ENCODE measurements at regions of chr1 and their contacts with region 1.

Region 1: GRCh38 chr1:111481387-111482221 is 7.8 kb downstream of the C1orf162 start:
- DNase-seq: peak; percentile 77
- ATAC-seq: peak; percentile 61
- H3K4me3 Mint-ChIP-seq: no peak overlapping the region
- H3K27ac Mint-ChIP-seq: peak overlapping the region; percentile 40
- H3K4me1 Mint-ChIP-seq: peaks cover 37% of the 10 kb centered on the region
- H3K27me3 Mint-ChIP-seq: no peaks in the 10 kb centered on the region

Region 2: DNA sequence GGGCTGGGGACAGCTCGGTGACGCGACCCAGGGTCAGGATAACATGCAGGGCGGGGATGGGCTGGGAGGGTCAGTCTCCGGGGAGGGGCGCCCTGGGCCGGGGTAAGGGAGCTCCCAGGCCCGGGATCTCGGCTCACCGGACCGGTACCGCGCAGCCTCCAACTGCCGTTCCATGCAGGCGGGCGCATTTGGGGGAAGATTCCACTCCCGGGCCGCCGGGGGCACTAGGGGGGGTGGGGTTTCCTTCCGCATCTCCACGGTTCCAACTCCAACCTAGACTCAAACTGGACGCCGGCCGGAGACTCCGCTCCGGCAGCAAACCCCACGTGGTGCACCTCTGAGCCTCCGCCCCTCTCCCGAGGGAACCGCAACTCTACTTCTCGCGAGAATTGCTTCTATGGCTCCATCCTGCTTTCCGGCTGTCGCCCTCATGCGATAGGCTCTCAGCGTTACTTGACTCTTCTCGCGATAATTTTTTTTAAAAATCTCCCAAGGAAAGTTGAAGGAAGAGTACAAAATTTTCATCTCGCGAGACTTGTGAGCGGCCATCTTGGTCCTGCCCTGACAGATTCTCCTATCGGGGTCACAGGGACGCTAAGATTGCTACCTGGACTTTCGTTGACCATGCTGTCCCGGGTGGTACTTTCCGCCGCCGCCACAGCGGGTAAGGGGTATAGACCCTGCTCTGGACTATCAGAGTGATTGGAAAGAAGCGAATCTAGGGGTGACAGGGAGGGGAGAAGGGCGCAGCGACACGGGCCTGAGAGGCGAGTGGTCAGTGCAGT is 32.5 kb before region 1 on chr1 and contains the starts of genes ATP5PB and WDR77:
- CTCF ChIA-PET with region 1: interaction called, 12 read pairs
- POLR2A ChIA-PET with region 1: interaction called, 19 read pairs
- DNase-seq: peak; percentile 96
- ATAC-seq: peak; percentile 97
- H3K4me3 Mint-ChIP-seq: peak within 1 kb of the TSS; percentile 100
- H3K27ac Mint-ChIP-seq: peak within 1 kb of the TSS; percentile 99
- H3K4me1 Mint-ChIP-seq: peaks cover 76% of the 10 kb centered on the region
- H3K27me3 Mint-ChIP-seq: no peaks in the 10 kb centered on the region
- total RNA-seq, gene ATP5PB: 396 to 404 TPM
- total RNA-seq, gene WDR77: 54.3 to 57.8 TPM

Region 3: DNA sequence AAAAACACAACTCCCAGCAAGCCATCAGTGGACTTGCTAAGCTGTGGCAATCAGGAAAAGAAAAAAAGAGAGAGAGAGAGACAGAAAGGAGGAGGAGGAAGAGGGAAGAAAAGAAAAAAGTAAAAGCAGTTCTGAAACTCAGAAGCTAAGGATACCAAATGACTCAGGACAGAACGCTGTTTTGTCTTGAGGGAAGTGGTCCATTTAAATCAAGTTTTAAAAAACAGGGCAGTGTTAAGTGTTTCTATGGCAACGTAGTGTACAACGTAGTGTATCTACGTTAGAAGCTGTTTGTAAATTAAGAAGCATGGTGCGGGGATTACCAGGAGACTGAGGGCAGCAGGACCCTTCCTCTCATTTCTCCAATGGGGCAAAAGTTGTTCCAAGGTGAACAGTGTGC is 16.0 kb after region 1 on chr1:
- CTCF ChIA-PET with region 1: interaction called, 13 read pairs
- POLR2A ChIA-PET with region 1: no interaction called
- DNase-seq: no peak
- ATAC-seq: no peak
- H3K4me3 Mint-ChIP-seq: no peak overlapping the region
- H3K27ac Mint-ChIP-seq: peak overlapping the region; percentile 26
- H3K4me1 Mint-ChIP-seq: peaks cover 30% of the 10 kb centered on the region
- H3K27me3 Mint-ChIP-seq: no peaks in the 10 kb centered on the region

Region 4: GRCh38 chr1:111747282-111747734 is 265.7 kb after region 1 on chr1:
- CTCF ChIA-PET with region 1: interaction called, 35 read pairs
- POLR2A ChIA-PET with region 1: no interaction called
- DNase-seq: peak; percentile 89
- ATAC-seq: peak; percentile 91
- H3K4me3 Mint-ChIP-seq: no peak overlapping the region
- H3K27ac Mint-ChIP-seq: no peak overlapping the region
- H3K4me1 Mint-ChIP-seq: peaks cover 25% of the 10 kb centered on the region
- H3K27me3 Mint-ChIP-seq: peaks cover 17% of the 10 kb centered on the region

Region 5: GRCh38 chr1:111769517-111770146 is 288.0 kb after region 1 on chr1:
- CTCF ChIA-PET with region 1: interaction called, 12 read pairs
- POLR2A ChIA-PET with region 1: no interaction called
- DNase-seq: peak; percentile 64
- ATAC-seq: no peak
- H3K4me3 Mint-ChIP-seq: no peak overlapping the region
- H3K27ac Mint-ChIP-seq: no peak overlapping the region
- H3K4me1 Mint-ChIP-seq: no peaks in the 10 kb centered on the region
- H3K27me3 Mint-ChIP-seq: no peaks in the 10 kb centered on the region